Activated CD4-positive, alpha-beta memory T cell treated with anti-CD3 and anti-CD28 coated beads for 36 hours (primary cell): ENCODE measurements at regions of chr10 and their contacts with region 1.

Region 1: DNA sequence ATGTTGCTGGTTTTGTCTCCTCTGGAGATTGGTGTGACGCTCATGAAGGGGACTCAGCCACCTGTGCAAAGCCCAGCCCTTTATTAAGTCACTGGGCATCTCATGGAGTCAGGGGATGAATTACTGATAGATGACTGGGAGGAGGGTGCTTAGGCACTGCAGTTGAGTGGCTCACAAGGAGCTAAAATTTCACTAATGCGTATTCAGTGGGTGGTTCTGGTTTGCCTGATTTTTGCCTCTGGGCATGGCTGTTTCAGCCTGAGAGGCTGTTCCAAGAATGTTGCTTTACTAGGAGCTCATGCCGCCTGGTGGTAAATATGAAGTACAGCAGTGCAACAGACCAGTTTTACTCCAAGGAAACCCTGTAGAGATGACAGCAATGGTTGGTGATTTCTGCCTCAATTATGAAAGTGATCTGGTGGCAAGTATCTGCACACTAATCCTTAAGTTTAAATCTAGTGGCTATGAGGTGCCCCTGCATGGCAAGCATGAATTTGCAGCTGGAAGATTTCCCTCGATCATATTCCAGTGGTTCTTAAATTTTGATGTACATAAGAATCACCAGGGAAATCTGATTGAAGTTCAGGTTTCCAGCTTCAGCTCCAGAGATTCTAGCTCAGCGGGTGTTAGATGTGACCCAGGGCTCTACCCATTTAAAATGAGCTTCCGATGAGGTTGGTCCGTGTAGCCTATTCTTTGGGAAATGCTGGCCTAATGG is 19.9 kb downstream of the ACTA2 start:
- DNase-seq: peak; percentile 44
- H3K4me3 Mint-ChIP-seq: no peak overlapping the region
- H3K27ac Mint-ChIP-seq: no peak overlapping the region
- H3K4me1 Mint-ChIP-seq: peaks cover 20% of the 10 kb centered on the region
- H3K27me3 Mint-ChIP-seq: no peaks in the 10 kb centered on the region

Region 2: GRCh38 chr10:88728107-88728763 is 204.5 kb before region 1 on chr10:
- CTCF ChIA-PET with region 1: interaction called, 16 read pairs
- POLR2A ChIA-PET with region 1: no interaction called
- intact Hi-C with region 1: loop called (anchors 1 kb)
- DNase-seq: peak; percentile 76
- H3K4me3 Mint-ChIP-seq: no peak overlapping the region
- H3K27ac Mint-ChIP-seq: no peak overlapping the region
- H3K4me1 Mint-ChIP-seq: no peaks in the 10 kb centered on the region
- H3K27me3 Mint-ChIP-seq: peaks cover 1% of the 10 kb centered on the region

Region 3: DNA sequence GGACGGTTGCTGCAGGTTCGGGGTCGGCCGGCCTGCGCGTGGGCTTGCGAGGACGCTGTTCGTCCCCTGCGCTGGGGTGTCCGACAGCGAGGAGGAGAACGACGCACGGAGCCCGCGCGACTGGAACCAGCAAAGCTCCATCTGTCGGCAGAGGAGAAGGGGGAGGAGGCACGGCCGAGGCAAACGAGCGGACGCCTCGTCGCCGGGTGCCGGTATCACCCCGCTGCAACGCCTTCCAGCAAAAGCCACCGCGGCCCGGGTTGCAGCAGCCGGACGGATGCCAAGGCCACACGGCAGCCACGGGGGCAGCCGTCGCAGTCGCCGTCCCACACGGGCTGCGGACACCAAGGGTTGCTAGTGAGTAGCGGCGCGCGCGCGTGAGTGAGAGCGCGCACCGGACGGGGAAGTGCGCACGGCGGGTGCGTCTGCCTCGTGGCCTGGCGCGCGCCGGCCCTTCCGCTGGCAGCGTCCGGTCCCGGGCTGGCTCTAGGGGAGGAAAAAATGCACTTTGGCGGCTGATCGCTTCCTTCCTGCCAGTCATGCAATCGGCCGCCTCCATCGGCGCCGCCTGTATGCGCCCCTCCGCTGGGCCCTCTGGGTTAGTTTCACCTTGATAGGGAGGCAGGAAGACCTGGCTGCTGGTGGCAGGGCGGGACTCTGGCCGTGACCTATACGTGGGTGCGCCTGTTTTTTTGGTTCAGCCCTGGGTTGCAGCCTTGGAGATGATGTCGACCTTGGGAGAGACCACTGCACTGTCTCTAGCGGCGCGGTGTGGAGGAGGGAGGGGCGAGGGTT is 52.2 kb before region 1 on chr10:
- CTCF ChIA-PET with region 1: interaction called, 34 read pairs
- POLR2A ChIA-PET with region 1: interaction called, 3 read pairs
- intact Hi-C with region 1: loop called (anchors 1 kb)
- DNase-seq: peak; percentile 86
- H3K4me3 Mint-ChIP-seq: peak overlapping the region; percentile 88
- H3K27ac Mint-ChIP-seq: peak overlapping the region; percentile 95
- H3K4me1 Mint-ChIP-seq: peaks cover 59% of the 10 kb centered on the region
- H3K27me3 Mint-ChIP-seq: no peaks in the 10 kb centered on the region

Region 4: DNA sequence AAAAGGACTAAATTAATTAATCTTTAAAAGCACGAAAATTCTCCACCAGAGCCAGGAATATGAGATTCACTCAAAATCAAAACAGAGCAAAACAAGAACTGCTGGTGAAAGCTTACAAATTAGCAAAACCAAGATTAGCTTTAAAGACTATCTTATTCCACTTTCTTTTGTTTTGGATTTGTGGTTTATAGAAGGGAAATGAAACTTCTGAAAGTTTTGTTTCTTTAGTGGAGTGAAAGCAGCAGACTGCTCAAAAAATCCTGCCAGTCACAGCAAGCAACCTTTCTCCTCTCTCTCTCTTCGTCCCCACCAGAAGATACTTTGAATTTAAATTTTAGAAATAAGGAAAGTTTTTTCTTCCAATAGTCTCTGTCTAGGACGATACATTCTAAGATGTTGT is 12.1 kb after region 1 on chr10:
- CTCF ChIA-PET with region 1: interaction called, 13 read pairs
- POLR2A ChIA-PET with region 1: no interaction called
- intact Hi-C with region 1: no loop called
- DNase-seq: no peak
- H3K4me3 Mint-ChIP-seq: no peak overlapping the region
- H3K27ac Mint-ChIP-seq: no peak overlapping the region
- H3K4me1 Mint-ChIP-seq: peaks cover 14% of the 10 kb centered on the region
- H3K27me3 Mint-ChIP-seq: no peaks in the 10 kb centered on the region

Region 5: DNA sequence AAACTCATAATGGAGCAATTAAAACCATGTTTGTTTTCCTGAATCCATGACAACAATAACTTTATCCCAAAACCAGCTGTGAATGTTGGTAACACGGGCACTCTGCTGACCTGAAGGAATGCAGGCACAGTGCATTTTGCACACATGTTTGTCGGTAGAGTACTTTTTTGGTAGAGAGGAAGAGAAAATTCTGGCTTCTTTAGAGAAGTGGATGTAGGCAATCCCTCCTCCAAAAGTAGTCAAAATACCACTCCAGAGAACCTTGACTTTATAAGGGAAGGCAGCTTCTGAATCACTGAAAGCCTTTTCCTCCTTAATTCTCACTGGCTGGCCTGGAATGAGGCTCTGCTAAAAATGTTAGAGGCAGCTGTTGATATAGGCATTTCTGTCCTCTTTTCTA is 35.7 kb after region 1 on chr10:
- CTCF ChIA-PET with region 1: no interaction called
- POLR2A ChIA-PET with region 1: no interaction called
- intact Hi-C with region 1: no loop called
- DNase-seq: no peak
- H3K4me3 Mint-ChIP-seq: no peak overlapping the region
- H3K27ac Mint-ChIP-seq: no peak overlapping the region
- H3K4me1 Mint-ChIP-seq: peaks cover 1% of the 10 kb centered on the region
- H3K27me3 Mint-ChIP-seq: no peaks in the 10 kb centered on the region

Region 6: GRCh38 chr10:89003344-89003743 is 70.6 kb after region 1 on chr10:
- CTCF ChIA-PET with region 1: interaction called, 24 read pairs
- POLR2A ChIA-PET with region 1: no interaction called
- intact Hi-C with region 1: loop called (anchors 1 kb)
- DNase-seq: no peak
- H3K4me3 Mint-ChIP-seq: no peak overlapping the region
- H3K27ac Mint-ChIP-seq: peak overlapping the region; percentile 83
- H3K4me1 Mint-ChIP-seq: peaks cover 66% of the 10 kb centered on the region
- H3K27me3 Mint-ChIP-seq: no peaks in the 10 kb centered on the region

Region 7: DNA sequence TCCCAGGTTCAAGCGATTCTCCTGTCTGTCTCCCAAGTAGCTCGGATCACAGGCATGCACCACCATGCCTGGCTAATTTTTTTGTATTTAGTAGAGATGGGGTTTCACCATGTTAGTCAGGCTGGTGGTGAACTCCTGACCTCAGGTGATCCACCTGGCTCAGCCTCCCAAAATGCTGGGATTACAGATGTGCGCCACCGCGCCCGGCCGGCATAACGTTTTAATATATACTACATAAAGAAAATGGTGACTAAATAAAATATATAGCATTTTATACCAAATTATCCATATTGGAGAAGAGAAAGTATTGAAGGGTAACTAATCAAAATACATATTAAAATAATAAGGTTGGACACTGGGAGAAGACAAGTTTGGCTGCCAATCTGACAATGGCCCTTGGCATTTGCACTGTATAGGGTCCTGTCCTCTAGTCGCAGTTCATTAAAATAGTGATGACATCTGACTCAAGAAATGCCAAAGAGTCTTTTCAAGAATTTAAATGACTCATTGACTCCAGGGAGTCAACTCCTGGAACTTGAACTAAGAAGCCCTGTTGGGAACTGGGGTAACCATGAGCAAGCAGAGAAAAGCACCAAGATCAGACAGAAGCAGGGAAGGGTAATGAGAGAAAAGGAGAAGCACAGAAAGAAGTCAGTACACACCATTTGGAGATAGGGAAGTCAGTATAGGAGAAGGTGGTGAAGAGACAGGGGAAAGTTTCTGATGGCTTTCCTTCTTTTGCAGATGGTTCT is 183.4 kb after region 1 on chr10:
- CTCF ChIA-PET with region 1: no interaction called
- POLR2A ChIA-PET with region 1: no interaction called
- intact Hi-C with region 1: loop called (anchors 1 kb)
- DNase-seq: no peak
- H3K4me3 Mint-ChIP-seq: no peak overlapping the region
- H3K27ac Mint-ChIP-seq: no peak overlapping the region
- H3K4me1 Mint-ChIP-seq: peaks cover 2% of the 10 kb centered on the region
- H3K27me3 Mint-ChIP-seq: peaks cover 19% of the 10 kb centered on the region

Region 8: GRCh38 chr10:89251409-89252224 is 318.9 kb after region 1 on chr10 and contains the start of gene LIPA:
- CTCF ChIA-PET with region 1: no interaction called
- POLR2A ChIA-PET with region 1: no interaction called
- intact Hi-C with region 1: loop called (anchors 1 kb)
- DNase-seq: peak; percentile 96
- H3K4me3 Mint-ChIP-seq: peak within 1 kb of the TSS; percentile 83
- H3K27ac Mint-ChIP-seq: peak within 1 kb of the TSS; percentile 46
- H3K4me1 Mint-ChIP-seq: peaks cover 30% of the 10 kb centered on the region
- H3K27me3 Mint-ChIP-seq: no peaks in the 10 kb centered on the region
- total RNA-seq, gene LIPA: 22.7 to 23.8 TPM